CD4-positive, alpha-beta memory T cell (primary cell): ENCODE measurements at regions of chr10 and their contacts with region 1.

Region 1: DNA sequence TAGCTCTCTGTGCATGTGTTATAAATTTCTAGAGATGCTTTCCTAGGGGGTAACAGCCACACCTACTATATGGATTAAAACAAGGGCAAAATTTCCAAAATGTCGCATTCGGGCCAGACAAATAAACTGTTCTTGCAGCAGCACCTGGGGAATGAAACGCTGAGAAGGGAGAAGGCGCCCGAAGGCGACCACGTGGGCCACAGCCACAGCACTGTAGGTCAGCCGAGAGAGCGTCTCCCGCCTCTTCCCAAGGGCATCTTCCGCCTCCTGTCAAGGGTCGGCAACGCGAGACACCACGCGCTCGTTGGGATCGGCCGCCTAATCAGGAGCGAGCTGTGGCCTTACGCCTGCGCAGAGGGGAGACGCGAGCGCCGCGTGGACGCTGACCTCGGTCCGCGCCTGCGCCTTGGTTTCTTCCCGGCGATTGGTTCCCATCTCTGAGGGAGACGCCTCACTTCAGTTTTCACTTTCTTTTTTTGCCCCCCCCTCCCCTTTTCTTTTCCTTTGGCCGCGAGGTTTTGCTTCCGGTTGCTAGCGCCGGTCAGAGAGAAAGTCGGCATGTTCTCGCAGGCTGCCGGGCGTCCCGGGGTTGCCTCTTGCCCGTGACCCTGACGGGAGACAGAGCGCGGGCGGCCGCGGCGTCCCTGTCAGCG is at the start of gene TASOR2:
- DNase-seq: peak; percentile 92 to 93 (median 93)
- H3K4me3 ChIP-seq: peak within 1 kb of the TSS; percentile 76 to 83
- H3K4me3 Mint-ChIP-seq: peak within 1 kb of the TSS; percentile 95 to 99 (median 98)
- H3K27ac ChIP-seq: peak within 1 kb of the TSS; percentile 97
- H3K27ac Mint-ChIP-seq: peak within 1 kb of the TSS; percentile 94 to 99 (median 99)
- H3K4me1 ChIP-seq: peaks cover 48% of the 10 kb centered on the region
- H3K4me1 Mint-ChIP-seq: peaks cover 25 to 58% (median 37%) of the 10 kb centered on the region in 4 donors
- H3K27me3 ChIP-seq: no peaks in the 10 kb centered on the region
- H3K27me3 Mint-ChIP-seq: no peaks in the 10 kb centered on the region
- total RNA-seq, gene TASOR2: 69.1 to 85.7 TPM

Region 2: DNA sequence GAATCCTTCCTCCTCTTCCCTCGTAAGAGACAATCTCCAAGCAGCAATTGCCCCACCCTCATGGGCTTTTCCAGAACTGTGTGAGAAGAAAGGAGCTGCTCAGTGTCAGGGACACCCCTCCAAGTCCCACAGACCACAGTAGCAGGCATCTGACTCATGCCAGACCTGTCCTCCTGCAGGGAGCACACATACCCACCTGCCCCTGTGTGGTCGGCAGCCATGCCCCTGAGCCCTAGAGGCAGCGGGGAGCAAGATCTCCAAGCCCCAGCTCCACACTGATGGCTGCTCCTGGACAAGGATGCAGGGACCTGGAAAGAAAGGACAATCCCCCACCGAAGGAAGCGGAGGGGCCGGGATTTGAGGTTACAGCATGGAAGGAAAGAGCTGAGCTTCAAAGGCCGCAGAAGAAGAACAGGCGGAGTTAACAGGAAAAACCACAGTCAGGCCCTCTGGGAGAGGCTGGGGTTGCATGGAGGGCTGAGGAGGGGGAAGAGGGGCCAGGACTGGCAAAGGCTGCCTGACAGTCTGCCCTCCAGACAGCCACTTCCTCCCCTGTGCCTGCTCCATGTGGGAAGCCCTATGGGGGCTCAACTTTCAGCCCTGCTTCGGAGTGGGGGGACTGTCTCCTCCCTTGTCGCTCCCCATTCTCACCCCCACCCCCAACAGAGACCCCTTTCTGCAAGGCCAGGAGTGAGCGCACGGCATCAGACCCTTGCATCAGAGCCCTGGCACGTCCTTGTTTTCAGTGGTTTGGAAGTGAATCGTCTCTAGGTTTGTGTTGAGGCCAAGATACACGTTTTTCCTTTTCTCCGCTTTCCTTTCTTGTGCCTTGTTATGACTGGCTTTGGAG is 64.9 kb before region 1 on chr10:
- CTCF ChIA-PET with region 1: no interaction called
- POLR2A ChIA-PET with region 1: no interaction called
- intact Hi-C with region 1: no loop called
- DNase-seq: no peak
- H3K4me3 ChIP-seq: no peak overlapping the region
- H3K4me3 Mint-ChIP-seq: no peak overlapping the region
- H3K27ac ChIP-seq: no peak overlapping the region
- H3K27ac Mint-ChIP-seq: peak overlapping the region in 2 of 7 donors; percentile 25 to 42
- H3K4me1 ChIP-seq: no peaks in the 10 kb centered on the region
- H3K4me1 Mint-ChIP-seq: peaks cover 0 to 7% (median 3%) of the 10 kb centered on the region in 4 donors
- H3K27me3 ChIP-seq: no peaks in the 10 kb centered on the region
- H3K27me3 Mint-ChIP-seq: no peaks in the 10 kb centered on the region

Region 3: GRCh38 chr10:5666008-5666829 is 18.2 kb before region 1 on chr10 and contains the start of gene ASB13:
- CTCF ChIA-PET with region 1: interaction called, 4 read pairs
- POLR2A ChIA-PET with region 1: interaction called, 4 read pairs
- intact Hi-C with region 1: loop called (anchors 2 kb)
- DNase-seq: peak in 4 of 5 donors; percentile 15 to 28 (median 26)
- H3K4me3 ChIP-seq: peak within 1 kb of the TSS; percentile 37 to 77
- H3K4me3 Mint-ChIP-seq: peak within 1 kb of the TSS; percentile 93 to 96 (median 96)
- H3K27ac ChIP-seq: no peak within 1 kb of the TSS
- H3K27ac Mint-ChIP-seq: peak within 1 kb of the TSS; percentile 51 to 91 (median 82)
- H3K4me1 ChIP-seq: peaks cover 16% of the 10 kb centered on the region
- H3K4me1 Mint-ChIP-seq: peaks cover 22 to 45% (median 27%) of the 10 kb centered on the region in 4 donors
- H3K27me3 ChIP-seq: no peaks in the 10 kb centered on the region
- H3K27me3 Mint-ChIP-seq: no peaks in the 10 kb centered on the region
- total RNA-seq, gene ASB13: 15.4 to 18.5 TPM

Region 4: DNA sequence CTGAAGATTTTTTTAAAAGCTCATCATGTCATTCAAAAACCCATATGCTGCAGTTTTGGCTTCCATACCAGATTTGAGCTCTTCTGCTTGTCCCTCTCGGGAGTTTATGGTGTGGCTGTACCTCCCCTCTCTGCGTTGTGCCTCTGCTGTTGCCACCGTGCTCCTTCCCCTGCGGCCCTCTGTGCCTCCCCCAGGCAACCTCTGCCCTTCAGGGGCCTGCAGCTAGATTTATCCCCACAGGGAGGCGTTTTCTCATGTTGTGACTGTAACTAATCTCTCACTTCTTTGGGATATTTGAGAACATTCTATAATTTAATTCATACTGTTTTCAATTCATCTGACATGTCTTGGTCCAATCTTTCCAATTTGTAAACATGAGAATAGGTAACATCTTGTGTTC is 52.9 kb after region 1 on chr10:
- CTCF ChIA-PET with region 1: no interaction called
- POLR2A ChIA-PET with region 1: no interaction called
- intact Hi-C with region 1: no loop called
- DNase-seq: peak in 1 of 5 donors; percentile 7
- H3K4me3 ChIP-seq: no peak overlapping the region
- H3K4me3 Mint-ChIP-seq: no peak overlapping the region
- H3K27ac ChIP-seq: no peak overlapping the region
- H3K27ac Mint-ChIP-seq: peak overlapping the region in 4 of 7 donors; percentile 44 to 90 (median 67)
- H3K4me1 ChIP-seq: no peaks in the 10 kb centered on the region
- H3K4me1 Mint-ChIP-seq: peaks cover 3 to 26% (median 15%) of the 10 kb centered on the region in 4 donors
- H3K27me3 ChIP-seq: no peaks in the 10 kb centered on the region
- H3K27me3 Mint-ChIP-seq: no peaks in the 10 kb centered on the region

Region 5: GRCh38 chr10:5776136-5776880 is 91.9 kb after region 1 on chr10:
- CTCF ChIA-PET with region 1: no interaction called
- POLR2A ChIA-PET with region 1: no interaction called
- intact Hi-C with region 1: loop called (anchors 10 kb)
- DNase-seq: no peak
- H3K4me3 ChIP-seq: peak overlapping the region in 1 of 2 donors; percentile 23
- H3K4me3 Mint-ChIP-seq: peak overlapping the region; percentile 56 to 81 (median 76)
- H3K27ac ChIP-seq: peak overlapping the region; percentile 58
- H3K27ac Mint-ChIP-seq: peak overlapping the region; percentile 88 to 97 (median 94)
- H3K4me1 ChIP-seq: peaks cover 26% of the 10 kb centered on the region
- H3K4me1 Mint-ChIP-seq: peaks cover 35 to 65% (median 46%) of the 10 kb centered on the region in 4 donors
- H3K27me3 ChIP-seq: no peaks in the 10 kb centered on the region
- H3K27me3 Mint-ChIP-seq: no peaks in the 10 kb centered on the region

Region 6: GRCh38 chr10:5788969-5789368 is 104.5 kb after region 1 on chr10:
- CTCF ChIA-PET with region 1: no interaction called
- POLR2A ChIA-PET with region 1: no interaction called
- intact Hi-C with region 1: no loop called
- DNase-seq: peak in 1 of 5 donors; percentile 13
- H3K4me3 ChIP-seq: no peak overlapping the region
- H3K4me3 Mint-ChIP-seq: peak overlapping the region in 1 of 8 donors; percentile 33
- H3K27ac ChIP-seq: no peak overlapping the region
- H3K27ac Mint-ChIP-seq: peak overlapping the region in 6 of 7 donors; percentile 43 to 85 (median 62)
- H3K4me1 ChIP-seq: peaks cover 18% of the 10 kb centered on the region
- H3K4me1 Mint-ChIP-seq: peaks cover 12 to 28% (median 21%) of the 10 kb centered on the region in 4 donors
- H3K27me3 ChIP-seq: no peaks in the 10 kb centered on the region
- H3K27me3 Mint-ChIP-seq: no peaks in the 10 kb centered on the region

Region 7: DNA sequence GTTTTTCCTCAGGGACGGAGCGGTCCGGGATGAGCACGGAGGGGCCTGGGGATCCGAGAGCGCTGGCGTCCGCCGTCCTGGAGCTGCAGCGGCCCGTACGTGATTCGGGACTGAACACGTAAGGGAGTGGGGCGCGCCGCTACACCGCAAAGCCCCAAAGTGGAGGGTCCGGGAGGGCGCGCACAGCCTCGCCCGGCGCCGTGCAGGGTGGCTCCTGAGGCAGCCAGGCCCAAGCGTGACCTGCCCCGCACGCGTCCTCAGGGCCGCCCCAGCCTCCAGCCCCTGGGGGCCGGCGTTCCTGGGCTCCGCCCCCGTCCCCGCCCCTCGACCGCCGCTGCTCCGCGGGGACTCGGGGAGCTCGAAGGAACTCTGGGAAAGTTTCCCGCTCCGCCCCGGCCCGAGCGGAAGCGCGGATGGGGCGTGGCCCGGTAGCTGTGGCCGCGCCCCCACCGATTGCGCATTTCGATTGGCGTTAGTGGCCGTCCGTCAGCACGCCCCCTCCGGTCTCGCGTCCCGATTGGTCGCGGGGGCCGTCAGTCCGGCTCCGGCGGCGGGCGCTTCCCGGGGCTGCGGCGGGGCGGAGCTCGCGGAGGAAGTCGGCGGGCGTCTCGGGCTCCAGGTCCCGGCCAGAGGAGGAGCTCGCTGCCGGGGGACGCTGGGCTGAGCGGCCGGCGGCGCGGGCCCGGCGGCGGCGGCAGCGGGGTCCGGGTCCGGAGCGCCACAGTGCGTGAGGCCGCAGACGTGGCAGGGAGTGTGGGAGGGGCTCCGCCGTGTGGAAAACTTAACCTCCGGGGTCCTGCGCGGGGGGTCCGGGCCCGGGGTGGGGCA is 205.4 kb after region 1 on chr10 and contains the starts of genes ANKRD16 and FBH1:
- CTCF ChIA-PET with region 1: no interaction called
- POLR2A ChIA-PET with region 1: interaction called, 10 read pairs
- intact Hi-C with region 1: no loop called
- DNase-seq: peak; percentile 95 to 98 (median 95)
- H3K4me3 ChIP-seq: peak within 1 kb of the TSS; percentile 54 to 71
- H3K4me3 Mint-ChIP-seq: peak within 1 kb of the TSS; percentile 91 to 98 (median 93)
- H3K27ac ChIP-seq: peak within 1 kb of the TSS; percentile 79
- H3K27ac Mint-ChIP-seq: peak within 1 kb of the TSS; percentile 87 to 95 (median 92)
- H3K4me1 ChIP-seq: peaks cover 33% of the 10 kb centered on the region
- H3K4me1 Mint-ChIP-seq: peaks cover 36 to 58% (median 45%) of the 10 kb centered on the region in 4 donors
- H3K27me3 ChIP-seq: no peaks in the 10 kb centered on the region
- H3K27me3 Mint-ChIP-seq: no peaks in the 10 kb centered on the region
- total RNA-seq, gene ANKRD16: 6.6 to 8.4 TPM
- total RNA-seq, gene FBH1: 91.4 to 97.5 TPM